Psoas muscle (tissue), 8 donors: ENCODE measurements at regions of chr1 and their contacts with region 1.

Region 1: GRCh38 chr1:20485527-20486456 is at the start of gene CAMK2N1:
- DNase-seq: peak; percentile 76 to 83
- ATAC-seq: peak; percentile 41 to 77 (median 64)
- H3K4me3 ChIP-seq: peak within 1 kb of the TSS; percentile 68
- H3K27ac ChIP-seq: peak within 1 kb of the TSS; percentile 3
- H3K4me1 ChIP-seq: peaks cover 11% of the 10 kb centered on the region
- H3K27me3 ChIP-seq: peaks cover 0 to 63% (median 20%) of the 10 kb centered on the region in 3 donors
- CTCF ChIP-seq: no peak
- total RNA-seq, gene CAMK2N1: 3.6 to 6.5 (median 4.9) TPM

Region 2: DNA sequence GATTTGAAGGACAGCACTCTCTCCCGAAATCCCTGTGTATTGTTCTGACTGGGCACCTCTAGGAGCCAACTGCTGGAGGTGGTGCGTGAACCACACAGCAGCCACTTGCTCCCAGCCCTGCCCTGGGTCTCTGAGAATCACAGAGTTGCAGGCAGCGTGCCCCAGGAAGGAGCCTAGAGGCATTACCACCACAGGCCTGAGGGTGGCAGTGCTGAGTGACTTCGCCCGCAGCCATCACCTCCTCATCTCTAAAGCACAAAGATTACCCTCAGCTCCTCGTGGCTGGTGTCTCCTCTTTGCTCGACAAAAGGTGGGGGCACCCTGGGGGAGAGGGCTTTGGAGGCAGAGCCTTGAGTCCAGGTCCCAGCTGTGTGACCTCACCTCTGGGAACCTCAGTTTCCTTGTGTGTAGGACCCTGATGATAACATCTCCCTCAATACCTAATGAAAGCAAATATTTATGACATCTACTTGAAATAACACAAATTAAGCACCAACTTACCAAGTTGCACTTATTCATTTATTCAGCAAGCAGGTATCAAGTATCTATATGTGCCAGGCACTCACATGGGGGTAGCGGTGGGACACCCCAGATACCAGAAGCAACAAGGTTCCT is 108.8 kb before region 1 on chr1:
- intact Hi-C with region 1: loop called (anchors 5 to 10 kb)
- DNase-seq: peak in 1 of 2 donors; percentile 61
- ATAC-seq: peak; percentile 40 to 59 (median 50)
- H3K4me3 ChIP-seq: no peak overlapping the region
- H3K27ac ChIP-seq: no peak overlapping the region
- H3K4me1 ChIP-seq: no peaks in the 10 kb centered on the region
- H3K27me3 ChIP-seq: no peaks in the 10 kb centered on the region
- CTCF ChIP-seq: peak; percentile 65